A549 (cell line): ENCODE measurements at regions of chr16 and their contacts with region 1.

Region 1: GRCh38 chr16:86016201-86016871 is 117.4 kb downstream of the IRF8 start:
- DNase-seq: peak; percentile 64 to 79
- ATAC-seq: peak; percentile 74 to 89
- H3K4me3 ChIP-seq: no peak overlapping the region
- H3K27ac ChIP-seq: no peak overlapping the region
- H3K4me1 ChIP-seq: no peaks in the 10 kb centered on the region
- CTCF ChIP-seq: peak; percentile 90
- EP300 ChIP-seq: no peak
- POLR2A ChIP-seq: no peak
- RAD21 ChIP-seq: peak; percentile 93 to 94

Region 2: DNA sequence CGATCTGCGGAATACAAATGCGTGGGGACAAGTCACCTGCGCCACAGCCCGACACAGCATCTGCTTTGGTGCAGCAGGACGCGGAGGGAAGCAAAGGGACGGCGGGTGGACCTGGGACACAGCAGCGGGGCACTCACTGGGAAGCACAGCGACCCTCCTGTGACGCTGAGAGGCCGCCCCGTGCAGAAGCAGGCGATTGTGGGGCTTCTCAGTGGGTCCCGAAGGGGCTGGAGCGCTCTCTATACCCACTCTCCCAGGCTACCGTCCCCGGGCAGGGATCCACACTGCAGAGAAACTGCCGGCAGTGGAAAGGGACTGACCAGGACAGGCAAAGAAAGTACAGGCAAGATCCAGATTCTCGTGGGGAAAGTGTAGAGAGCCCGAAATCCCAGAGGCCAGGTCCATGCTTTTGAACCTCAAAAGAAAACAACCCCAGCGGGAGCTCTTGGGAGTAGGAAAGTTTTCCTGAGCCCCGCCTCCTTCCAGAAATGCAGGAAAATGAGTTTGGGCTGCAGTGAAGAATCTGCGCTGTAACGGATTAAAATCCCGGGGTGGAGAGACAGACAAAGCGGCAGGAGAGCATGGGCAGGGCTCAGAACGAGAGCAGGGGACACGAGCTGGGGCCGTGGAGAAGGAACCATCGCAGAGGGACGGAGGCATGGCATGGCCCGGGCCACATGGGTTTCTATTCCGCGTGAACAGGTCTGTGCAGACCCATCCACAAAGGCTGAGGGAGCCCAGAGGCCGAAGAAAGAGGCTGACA is 204.1 kb before region 1 on chr16:
- CTCF ChIA-PET with region 1: interaction called, 22 read pairs
- POLR2A ChIA-PET with region 1: no interaction called
- DNase-seq: no peak
- ATAC-seq: peak; percentile 23 to 31; a peak in 4 of 6 replicates
- H3K4me3 ChIP-seq: no peak overlapping the region
- H3K27ac ChIP-seq: no peak overlapping the region
- H3K4me1 ChIP-seq: no peaks in the 10 kb centered on the region
- CTCF ChIP-seq: no peak
- EP300 ChIP-seq: no peak
- POLR2A ChIP-seq: no peak
- RAD21 ChIP-seq: no peak

Region 3: GRCh38 chr16:85838381-85838780 is 178.0 kb before region 1 on chr16:
- CTCF ChIA-PET with region 1: interaction called, 14 read pairs
- POLR2A ChIA-PET with region 1: no interaction called
- DNase-seq: no peak
- ATAC-seq: no peak
- H3K4me3 ChIP-seq: no peak overlapping the region
- H3K27ac ChIP-seq: no peak overlapping the region
- H3K4me1 ChIP-seq: no peaks in the 10 kb centered on the region
- CTCF ChIP-seq: no peak
- EP300 ChIP-seq: no peak
- POLR2A ChIP-seq: no peak
- RAD21 ChIP-seq: no peak

Region 4: DNA sequence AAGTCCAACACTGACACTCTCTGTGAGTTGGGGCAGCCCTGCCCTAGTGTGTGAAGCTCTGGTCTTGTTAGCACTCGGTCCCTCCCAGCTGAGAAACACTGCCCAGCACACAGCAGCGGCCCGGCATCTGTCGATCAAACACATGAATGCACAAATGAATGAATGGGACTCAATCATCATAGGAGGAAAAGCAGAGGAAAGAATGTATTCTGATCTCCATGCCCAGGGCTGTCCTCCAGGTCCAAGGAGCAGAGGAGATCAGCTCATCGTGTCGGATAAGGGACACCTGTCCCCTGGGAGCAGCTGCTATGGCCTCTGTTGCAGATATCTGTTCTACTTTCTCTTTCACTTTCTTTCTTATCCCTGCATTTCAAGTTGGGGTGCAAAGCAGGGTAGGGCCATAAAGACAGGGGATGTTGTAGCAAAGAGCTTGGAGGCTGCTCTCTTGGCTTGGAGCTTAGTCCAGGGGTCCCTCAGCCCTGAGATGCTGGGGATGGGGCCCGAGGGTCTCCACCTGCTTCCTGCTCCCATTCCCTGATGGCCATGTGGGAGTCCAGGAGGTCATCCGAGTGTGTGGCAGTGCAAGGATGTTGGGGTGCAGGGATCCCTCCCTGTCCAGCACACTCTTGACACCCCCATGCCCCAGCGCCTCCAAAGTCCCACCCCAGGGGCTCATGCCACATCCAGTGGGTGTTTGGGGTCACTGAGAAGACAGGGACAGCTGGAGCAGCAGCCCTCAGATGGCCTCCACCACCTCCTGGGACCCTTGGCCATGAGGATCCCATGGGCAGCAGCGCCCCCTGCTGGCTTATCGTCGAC is 29.2 kb before region 1 on chr16:
- CTCF ChIA-PET with region 1: interaction called, 20 read pairs
- POLR2A ChIA-PET with region 1: no interaction called
- DNase-seq: no peak
- ATAC-seq: peak in 1 of 2 experiments; percentile 62; a peak in 3 of 6 replicates
- H3K4me3 ChIP-seq: no peak overlapping the region
- H3K27ac ChIP-seq: no peak overlapping the region
- H3K4me1 ChIP-seq: no peaks in the 10 kb centered on the region
- CTCF ChIP-seq: peak; percentile 50
- EP300 ChIP-seq: no peak
- POLR2A ChIP-seq: no peak
- RAD21 ChIP-seq: peak; percentile 48 to 83

Region 5: DNA sequence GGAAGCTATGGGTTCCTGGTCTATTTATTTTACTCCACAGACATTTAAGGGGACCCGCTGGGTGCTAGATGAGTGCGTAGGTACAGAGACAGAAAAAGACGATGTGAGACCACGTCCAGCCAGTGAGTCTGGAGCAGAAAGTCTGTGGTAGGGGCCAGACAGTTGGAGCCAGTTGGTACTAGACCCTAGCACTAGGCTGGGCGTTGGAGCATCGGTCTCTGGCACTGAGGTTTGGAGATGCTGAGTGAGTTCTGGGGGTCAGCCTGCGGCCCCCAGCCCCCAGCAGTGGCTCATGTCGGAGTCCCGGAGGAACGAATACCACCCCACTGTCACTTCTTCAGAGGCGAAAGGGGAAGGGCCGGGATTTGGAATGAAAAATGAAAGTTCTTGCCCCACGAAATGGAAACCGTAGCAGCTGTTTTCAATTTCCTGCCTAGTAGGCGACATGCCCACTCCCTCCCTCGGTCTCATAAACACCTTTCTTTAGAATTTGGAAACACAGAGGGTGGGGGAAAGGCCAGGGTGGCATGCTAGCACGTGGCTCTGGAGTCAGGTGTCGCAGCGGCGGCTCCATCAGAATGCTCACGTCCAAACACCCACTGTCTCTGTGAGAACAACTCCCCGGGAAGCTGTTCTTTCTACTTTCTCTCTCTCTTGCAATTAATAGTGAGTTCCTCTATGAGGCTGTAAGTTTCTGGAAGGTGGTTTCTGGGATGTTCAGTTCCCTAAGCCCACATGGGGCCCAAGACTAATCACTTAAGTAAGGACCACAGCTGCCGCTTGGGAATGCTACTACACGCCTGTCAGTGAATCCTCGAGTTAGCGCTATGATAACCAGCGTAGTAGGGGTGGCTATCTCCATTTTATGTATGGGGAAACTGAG is 20.6 kb before region 1 on chr16:
- CTCF ChIA-PET with region 1: interaction called, 26 read pairs
- POLR2A ChIA-PET with region 1: no interaction called
- DNase-seq: no peak
- ATAC-seq: no peak
- H3K4me3 ChIP-seq: no peak overlapping the region
- H3K27ac ChIP-seq: no peak overlapping the region
- H3K4me1 ChIP-seq: no peaks in the 10 kb centered on the region
- CTCF ChIP-seq: no peak
- EP300 ChIP-seq: no peak
- POLR2A ChIP-seq: no peak
- RAD21 ChIP-seq: no peak

Region 6: GRCh38 chr16:86029131-86029741 is 12.9 kb after region 1 on chr16:
- CTCF ChIA-PET with region 1: interaction called, 68 read pairs
- POLR2A ChIA-PET with region 1: no interaction called
- DNase-seq: no peak
- ATAC-seq: peak in 1 of 2 experiments; percentile 15; a peak in 1 of 6 replicates
- H3K4me3 ChIP-seq: no peak overlapping the region
- H3K27ac ChIP-seq: no peak overlapping the region
- H3K4me1 ChIP-seq: no peaks in the 10 kb centered on the region
- CTCF ChIP-seq: no peak
- EP300 ChIP-seq: no peak
- POLR2A ChIP-seq: no peak
- RAD21 ChIP-seq: no peak

Region 7: GRCh38 chr16:86242244-86243122 is 226.1 kb after region 1 on chr16:
- CTCF ChIA-PET with region 1: no interaction called
- POLR2A ChIA-PET with region 1: no interaction called
- DNase-seq: no peak
- ATAC-seq: 0 out of 6 replicates have a peak, but pooled peaks of 1 of the 2 experiments have one; percentile 22
- H3K4me3 ChIP-seq: no peak overlapping the region
- H3K27ac ChIP-seq: no peak overlapping the region
- H3K4me1 ChIP-seq: no peaks in the 10 kb centered on the region
- CTCF ChIP-seq: no peak
- EP300 ChIP-seq: no peak
- POLR2A ChIP-seq: no peak
- RAD21 ChIP-seq: no peak